ENCODE measurements at regions of chr1 and their contacts with region 1.

Region 1: GRCh38 chr1:24642481-24643361 is at the start of gene SRRM1:
- DNase-seq: peak; percentile 98
- H3K4me3 Mint-ChIP-seq: peak within 1 kb of the TSS; percentile 94
- H3K27ac Mint-ChIP-seq: peak within 1 kb of the TSS; percentile 96
- H3K4me1 Mint-ChIP-seq: peaks cover 43% of the 10 kb centered on the region
- H3K27me3 Mint-ChIP-seq: no peaks in the 10 kb centered on the region
- total RNA-seq, gene SRRM1: 218 and 242 TPM in 2 replicates

Region 2: GRCh38 chr1:23959041-23959460 is 683.7 kb before region 1 on chr1:
- intact Hi-C with region 1: loop called (anchors 1 kb)
- DNase-seq: peak; percentile 90
- H3K4me3 Mint-ChIP-seq: peak overlapping the region; percentile 99
- H3K27ac Mint-ChIP-seq: peak overlapping the region; percentile 100
- H3K4me1 Mint-ChIP-seq: peaks cover 67% of the 10 kb centered on the region
- H3K27me3 Mint-ChIP-seq: no peaks in the 10 kb centered on the region

Region 3: DNA sequence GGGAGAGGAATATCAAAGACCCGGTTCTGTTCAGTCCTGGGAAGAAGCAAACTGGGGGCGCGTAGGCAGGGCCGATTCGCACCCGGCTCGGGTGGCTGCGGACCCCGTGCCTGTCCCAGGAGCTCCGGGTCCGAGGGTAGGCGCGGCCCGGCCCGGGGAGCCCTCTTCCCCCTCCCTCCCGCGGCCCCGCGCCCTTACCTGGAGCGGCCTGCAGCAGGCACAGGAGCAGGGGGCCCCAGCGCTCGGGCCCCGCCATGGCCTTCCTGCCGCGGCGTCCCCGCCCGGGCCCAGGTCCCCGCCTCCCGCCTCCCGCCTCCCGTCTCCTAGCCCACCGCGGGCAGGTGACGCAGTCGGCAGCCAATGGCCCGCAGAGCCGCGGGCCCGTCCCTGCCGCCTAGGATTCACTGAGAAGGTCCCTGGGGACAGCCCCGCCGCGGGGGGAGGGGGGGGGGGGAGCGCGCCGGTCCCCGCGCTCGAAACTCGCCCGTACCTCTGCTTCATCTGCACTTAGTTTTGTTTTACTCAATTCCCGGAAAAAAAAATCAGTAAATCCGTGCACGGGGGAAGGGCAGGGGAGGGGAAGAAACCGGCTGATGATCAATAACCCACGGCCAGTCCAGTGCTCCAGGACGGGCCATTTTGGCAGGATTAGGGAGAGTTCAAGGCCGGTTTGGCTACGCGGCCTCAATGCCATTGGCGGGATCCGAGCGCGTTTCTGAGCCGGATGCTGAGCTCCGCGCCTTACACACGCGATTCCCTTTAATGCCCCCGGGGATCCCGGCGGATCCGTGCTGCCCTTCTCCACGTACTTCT is 455.5 kb before region 1 on chr1 and contains the start of gene IFNLR1:
- intact Hi-C with region 1: loop called (anchors 2 kb)
- DNase-seq: peak; percentile 61
- H3K4me3 Mint-ChIP-seq: peak within 1 kb of the TSS; percentile 76
- H3K27ac Mint-ChIP-seq: peak within 1 kb of the TSS; percentile 23
- H3K4me1 Mint-ChIP-seq: peaks cover 40% of the 10 kb centered on the region
- H3K27me3 Mint-ChIP-seq: peaks cover 7% of the 10 kb centered on the region
- total RNA-seq, gene IFNLR1: 2.2 and 3.1 TPM in 2 replicates

Region 4: DNA sequence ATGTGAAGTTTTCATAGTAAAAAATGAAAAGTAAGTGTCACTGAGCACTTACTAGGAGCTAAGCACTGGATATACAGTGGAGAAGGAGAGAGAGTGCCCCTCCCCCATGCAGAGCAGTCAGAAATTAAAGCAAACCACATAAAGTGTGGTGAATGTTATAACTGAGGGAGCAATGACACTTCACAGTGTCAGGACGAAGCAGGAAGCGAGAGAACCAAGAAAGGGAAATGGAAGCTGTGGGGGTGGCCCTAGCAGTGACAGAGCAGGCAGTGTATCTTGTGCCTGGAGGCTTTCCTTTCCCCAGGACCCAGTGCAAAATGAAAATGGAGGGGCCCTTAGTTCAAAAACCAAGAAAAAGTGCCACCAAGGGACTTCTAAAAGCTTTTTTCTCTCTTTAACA is 161.6 kb before region 1 on chr1:
- intact Hi-C with region 1: loop called (anchors 5 kb)
- DNase-seq: peak; percentile 44
- H3K4me3 Mint-ChIP-seq: peak overlapping the region; percentile 60
- H3K27ac Mint-ChIP-seq: peak overlapping the region; percentile 96
- H3K4me1 Mint-ChIP-seq: peaks cover 45% of the 10 kb centered on the region
- H3K27me3 Mint-ChIP-seq: no peaks in the 10 kb centered on the region

Region 5: DNA sequence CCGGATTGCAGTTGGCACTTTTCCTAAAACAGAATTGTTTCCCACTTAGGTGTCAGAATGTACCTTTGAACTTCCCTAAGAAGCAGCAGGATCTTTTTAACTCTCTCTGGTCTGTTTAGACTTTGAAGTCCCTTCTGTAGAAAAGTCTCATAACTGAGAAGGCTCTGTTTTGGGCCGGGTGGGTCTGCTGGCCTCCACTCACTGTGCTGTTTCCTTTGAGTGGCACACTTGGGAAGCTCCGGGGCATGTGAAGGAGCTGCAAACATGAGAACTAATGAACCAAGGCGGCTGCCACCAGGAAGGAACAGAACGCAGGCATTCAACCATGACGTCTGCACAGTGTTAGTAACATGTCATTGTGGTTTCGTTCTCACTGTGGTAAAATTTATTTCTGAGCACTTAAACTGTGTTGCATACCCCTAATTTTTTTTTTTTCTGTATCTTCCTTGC is 106.3 kb before region 1 on chr1:
- intact Hi-C with region 1: loop called (anchors 2 kb)
- DNase-seq: peak; percentile 38
- H3K4me3 Mint-ChIP-seq: peak overlapping the region; percentile 75
- H3K27ac Mint-ChIP-seq: peak overlapping the region; percentile 95
- H3K4me1 Mint-ChIP-seq: peaks cover 67% of the 10 kb centered on the region
- H3K27me3 Mint-ChIP-seq: no peaks in the 10 kb centered on the region

Region 6: DNA sequence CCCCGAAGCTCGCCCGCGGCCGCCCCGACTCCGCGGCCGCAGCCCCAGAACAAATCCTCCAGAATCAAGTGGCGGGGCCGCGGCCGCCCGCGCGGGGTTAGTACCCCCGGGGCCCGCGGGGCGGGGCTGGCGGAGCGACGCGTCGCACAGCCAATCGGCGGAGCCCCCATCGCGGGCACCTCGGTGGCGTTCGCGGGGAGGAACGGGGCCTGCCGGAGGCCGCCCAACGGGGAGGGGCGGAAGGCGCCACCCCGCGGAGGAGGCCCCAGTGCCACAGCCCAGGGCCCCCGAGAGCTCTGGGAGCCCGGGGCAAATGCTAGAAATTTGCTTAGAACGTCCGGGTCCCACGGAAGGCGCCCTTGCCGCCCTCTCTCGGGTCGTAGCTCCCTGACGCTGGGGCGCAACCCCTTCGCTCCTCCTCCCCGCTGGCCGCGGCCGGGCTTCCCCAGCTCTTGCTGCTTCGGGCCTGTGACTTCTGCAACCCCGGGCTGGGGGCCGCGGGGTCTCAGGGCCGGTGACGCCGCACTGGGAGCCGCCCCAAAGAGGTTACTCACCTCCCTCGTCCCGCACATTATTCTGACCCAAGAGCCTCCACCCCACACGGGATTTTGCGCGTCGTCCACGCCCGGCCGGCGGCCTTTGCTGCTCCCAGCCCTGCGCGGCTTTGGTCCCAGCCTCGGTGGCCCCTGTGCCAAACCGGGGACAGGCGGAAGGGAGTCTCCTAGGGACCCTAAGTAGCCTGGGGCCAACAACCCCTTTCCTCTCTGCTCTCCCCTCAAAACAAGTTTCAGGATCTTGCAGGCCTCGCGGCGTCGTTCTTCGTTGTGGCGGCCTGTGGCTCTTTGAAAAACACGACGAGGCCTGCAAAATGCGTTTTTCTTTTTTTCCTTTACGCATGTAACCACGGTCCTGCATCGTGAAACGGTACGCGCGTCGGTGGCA is 287.8 kb after region 1 on chr1 and contains the start of gene RUNX3:
- intact Hi-C with region 1: loop called (anchors 5 kb)
- DNase-seq: peak; percentile 89
- H3K4me3 Mint-ChIP-seq: peak within 1 kb of the TSS; percentile 95
- H3K27ac Mint-ChIP-seq: peak within 1 kb of the TSS; percentile 92
- H3K4me1 Mint-ChIP-seq: peaks cover 71% of the 10 kb centered on the region
- H3K27me3 Mint-ChIP-seq: no peaks in the 10 kb centered on the region
- total RNA-seq, gene RUNX3: 133 and 140 TPM in 2 replicates

Region 7: GRCh38 chr1:25247024-25247828 is 604.5 kb after region 1 on chr1 and contains the start of gene RSRP1:
- intact Hi-C with region 1: loop called (anchors 2 kb)
- DNase-seq: peak; percentile 100
- H3K4me3 Mint-ChIP-seq: peak within 1 kb of the TSS; percentile 92
- H3K27ac Mint-ChIP-seq: peak within 1 kb of the TSS; percentile 99
- H3K4me1 Mint-ChIP-seq: peaks cover 50% of the 10 kb centered on the region
- H3K27me3 Mint-ChIP-seq: peaks cover 2% of the 10 kb centered on the region
- total RNA-seq, gene RSRP1: 123 and 129 TPM in 2 replicates